Heart left ventricle (tissue), 16 donors: ENCODE measurements at regions of chr3 and their contacts with region 1.

Region 1: GRCh38 chr3:109731620-109732473 is 394.5 kb upstream of the DPPA4 start:
- DNase-seq: peak in 2 of 5 donors; percentile 15 to 20
- ATAC-seq: peak in 3 of 4 donors; percentile 51 to 70 (median 52)
- H3K4me3 ChIP-seq: no peak overlapping the region
- H3K27ac ChIP-seq: no peak overlapping the region
- H3K4me1 ChIP-seq: no peaks in the 10 kb centered on the region
- H3K27me3 ChIP-seq: no peaks in the 10 kb centered on the region
- CTCF ChIP-seq: peak; percentile 67 to 92 (median 82)
- POLR2A ChIP-seq: no peak

Region 2: GRCh38 chr3:110314512-110315114 is 582.8 kb after region 1 on chr3:
- intact Hi-C with region 1: loop called in 9 of 10 experiments (anchors 1 to 10 kb)
- DNase-seq: peak in 3 of 5 donors; percentile 20 to 37 (median 29)
- ATAC-seq: peak in 3 of 4 donors; percentile 53 to 65 (median 53)
- H3K4me3 ChIP-seq: no peak overlapping the region
- H3K27ac ChIP-seq: no peak overlapping the region
- H3K4me1 ChIP-seq: peaks cover 0 to 3% (median 0%) of the 10 kb centered on the region in 12 donors
- H3K27me3 ChIP-seq: peaks cover 0 to 3% (median 0%) of the 10 kb centered on the region in 9 donors
- CTCF ChIP-seq: peak; percentile 56 to 79 (median 71)
- POLR2A ChIP-seq: no peak

Region 3: DNA sequence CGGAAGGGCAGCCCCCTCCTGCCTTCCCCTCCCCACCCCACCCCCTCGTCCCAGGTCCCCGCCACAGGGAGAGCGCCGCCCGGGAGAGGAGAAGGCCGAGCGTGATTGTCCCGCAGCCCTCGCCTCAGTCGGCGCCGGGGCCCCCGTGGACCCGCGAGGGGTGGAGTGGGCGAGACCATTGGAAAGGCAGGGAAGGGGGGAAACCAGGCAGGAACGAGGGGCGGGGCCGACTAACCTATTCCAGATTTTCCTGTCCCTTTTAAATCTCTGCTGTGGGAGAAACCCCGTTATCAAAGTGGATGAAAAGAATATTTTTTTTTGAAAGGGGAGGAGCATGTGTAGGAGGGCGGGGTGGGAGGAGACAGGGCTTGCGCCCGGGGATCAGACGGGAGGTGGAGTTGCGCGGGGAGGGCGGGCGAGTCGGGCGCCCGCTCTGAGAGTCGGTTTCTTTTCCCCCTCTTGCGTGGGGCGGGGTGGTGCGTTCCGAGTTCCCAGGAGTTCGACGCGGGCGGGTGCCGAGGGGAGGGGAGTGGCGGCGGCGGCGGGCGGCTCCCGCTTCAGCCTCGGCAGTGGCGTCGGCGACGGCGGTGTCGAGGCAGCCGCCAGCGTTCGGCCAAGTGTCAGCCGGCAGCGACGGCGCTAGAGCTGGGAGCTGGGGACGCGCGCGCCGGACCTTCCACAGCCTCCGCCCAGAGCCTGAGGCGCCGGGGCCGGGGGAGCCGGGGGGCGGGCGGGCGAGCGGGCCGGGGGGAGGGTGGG is 1339.6 kb after region 1 on chr3 and contains the start of gene NECTIN3:
- intact Hi-C with region 1: loop called in 1 of 10 experiments (anchors 10 kb)
- DNase-seq: peak; percentile 92 to 96 (median 94)
- ATAC-seq: peak; percentile 95
- H3K4me3 ChIP-seq: peak within 1 kb of the TSS; percentile 76 to 97 (median 86)
- H3K27ac ChIP-seq: peak within 1 kb of the TSS; percentile 81 to 92 (median 84)
- H3K4me1 ChIP-seq: peaks cover 0 to 27% (median 15%) of the 10 kb centered on the region in 12 donors
- H3K27me3 ChIP-seq: peaks cover 0 to 18% (median 0%) of the 10 kb centered on the region in 9 donors
- CTCF ChIP-seq: no peak
- POLR2A ChIP-seq: peak; percentile 36 to 53
- total RNA-seq, gene NECTIN3: 5.0 to 13.8 (median 9.3) TPM

Region 4: DNA sequence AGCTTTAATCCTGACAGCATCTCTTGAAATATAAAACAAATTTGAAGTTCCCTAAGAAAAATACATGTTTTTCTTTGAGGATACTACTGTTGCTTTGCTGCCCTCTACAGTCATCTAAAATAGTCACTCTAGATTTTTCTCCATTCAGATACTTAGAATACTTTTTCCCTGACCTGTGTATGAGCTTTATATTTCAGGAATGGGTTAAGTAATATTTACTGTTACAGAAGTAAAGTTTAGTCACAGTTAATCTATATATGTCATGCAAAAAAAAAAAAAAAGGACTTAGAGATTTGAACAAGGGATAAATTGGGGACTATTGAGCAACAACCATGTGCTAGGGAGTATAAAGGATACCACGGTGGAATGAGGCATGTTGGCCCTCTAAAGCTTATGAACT is 1348.6 kb after region 1 on chr3:
- intact Hi-C with region 1: loop called in 2 of 10 experiments (anchors 5 to 10 kb)
- DNase-seq: no peak
- ATAC-seq: peak in 1 of 4 donors; percentile 42
- H3K4me3 ChIP-seq: no peak overlapping the region
- H3K27ac ChIP-seq: no peak overlapping the region
- H3K4me1 ChIP-seq: peaks cover 0 to 5% (median 0%) of the 10 kb centered on the region in 12 donors
- H3K27me3 ChIP-seq: no peaks in the 10 kb centered on the region
- CTCF ChIP-seq: peak; percentile 28 to 68 (median 58)
- POLR2A ChIP-seq: no peak